Left cardiac atrium (tissue), 4 donors: ENCODE measurements at regions of chr11 and their contacts with region 1.

Region 1: DNA sequence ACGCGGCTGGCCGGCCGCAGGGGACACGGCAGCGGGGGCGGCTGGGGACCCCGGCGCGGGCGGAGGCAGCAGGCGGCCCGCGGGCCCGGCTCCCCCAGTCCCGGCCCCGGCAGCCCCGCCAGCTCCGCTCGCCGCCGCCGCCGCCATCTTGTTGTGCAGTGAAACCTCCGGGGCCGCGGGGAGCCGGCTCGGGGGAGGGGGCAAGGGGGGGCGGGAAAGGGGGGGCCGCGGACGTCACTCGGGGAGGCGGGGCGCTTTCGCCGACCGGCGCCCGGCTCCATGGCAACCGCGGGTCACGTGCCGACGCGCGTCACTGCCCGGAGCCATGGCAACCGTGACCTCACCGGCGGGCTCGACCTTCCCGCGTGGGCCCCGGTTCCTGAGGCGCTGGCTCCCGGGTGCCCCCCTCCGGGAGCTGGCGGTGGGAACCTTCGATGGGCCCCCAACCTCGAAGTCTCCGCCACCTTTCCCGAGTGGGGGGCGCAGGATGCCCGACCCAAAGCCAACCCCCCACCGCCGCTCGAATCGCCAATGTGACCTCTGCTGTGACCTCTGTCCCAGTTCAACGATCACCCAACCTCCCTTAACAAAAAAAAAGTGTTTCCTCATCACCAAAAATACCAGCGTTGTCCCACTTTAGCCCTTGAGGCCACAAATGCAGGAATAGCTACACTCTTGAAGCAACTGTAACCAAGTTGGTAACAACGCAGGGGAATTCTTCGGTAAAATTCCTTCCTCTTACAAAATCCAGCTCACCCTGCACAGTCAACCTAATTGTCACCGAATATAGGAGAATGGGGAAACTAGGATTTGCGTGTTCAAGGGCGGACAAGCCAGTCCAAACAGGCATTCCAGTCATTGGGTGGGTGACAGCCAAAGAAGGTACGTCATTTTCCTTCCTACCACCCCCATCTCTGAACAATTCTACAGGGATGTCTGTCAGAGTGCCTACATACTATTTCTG is at the start of gene SIK3:
- DNase-seq: peak; percentile 96
- ATAC-seq: peak; percentile 93 to 94
- total RNA-seq, gene SIK3: 22.4 to 36.9 TPM

Region 2: GRCh38 chr11:117026593-117027330 is 71.8 kb before region 1 on chr11:
- intact Hi-C with region 1: loop called in 1 of 2 experiments (anchors 10 kb)
- DNase-seq: no peak
- ATAC-seq: peak in 1 of 2 donors; percentile 47